Heart right ventricle (tissue), 16 donors: ENCODE measurements at regions of chr1 and their contacts with region 1.

Region 1: DNA sequence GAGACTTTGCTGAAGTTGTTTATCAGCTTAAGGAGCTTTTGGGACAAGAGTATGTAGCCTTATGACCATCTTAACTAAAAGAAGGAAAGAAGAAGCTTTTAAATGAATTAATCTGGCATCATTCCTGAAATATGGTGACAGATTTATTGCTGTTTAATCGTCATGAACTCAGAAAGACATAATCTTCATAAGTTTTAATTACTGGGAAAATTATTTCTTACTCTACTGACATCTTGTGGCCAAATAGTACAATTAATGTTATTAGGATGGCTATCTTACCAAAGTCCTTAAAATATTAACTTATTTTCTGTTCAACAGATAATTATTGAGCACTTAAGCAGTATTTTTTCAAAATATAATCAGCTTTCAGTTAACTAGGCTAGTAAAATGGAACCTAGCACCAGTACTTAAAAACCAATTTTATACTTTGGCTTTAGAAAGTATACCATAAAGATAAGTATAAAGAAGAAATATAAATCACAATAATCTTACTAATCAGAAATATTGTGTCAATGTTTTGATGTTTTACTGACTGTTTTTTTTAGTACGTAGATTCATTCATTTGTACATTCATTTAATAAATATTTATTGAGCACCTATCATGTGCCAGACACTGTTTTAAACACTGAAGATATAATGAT is 34.7 kb upstream of the GPR25 start:
- DNase-seq: no peak
- ATAC-seq: no peak
- H3K4me3 ChIP-seq: no peak overlapping the region
- H3K27ac ChIP-seq: no peak overlapping the region
- H3K4me1 ChIP-seq: peaks cover 0 to 5% (median 0%) of the 10 kb centered on the region in 9 donors
- H3K27me3 ChIP-seq: no peaks in the 10 kb centered on the region
- CTCF ChIP-seq: peak in 8 of 9 donors; percentile 38 to 68 (median 57)

Region 2: GRCh38 chr1:200558866-200559459 is 279.1 kb before region 1 on chr1:
- intact Hi-C with region 1: loop called in 2 of 10 experiments (anchors 10 kb)
- DNase-seq: peak in 1 of 2 donors; percentile 5
- ATAC-seq: no peak
- H3K4me3 ChIP-seq: no peak overlapping the region
- H3K27ac ChIP-seq: no peak overlapping the region
- H3K4me1 ChIP-seq: no peaks in the 10 kb centered on the region
- H3K27me3 ChIP-seq: no peaks in the 10 kb centered on the region
- CTCF ChIP-seq: peak; percentile 11 to 69 (median 55)

Region 3: DNA sequence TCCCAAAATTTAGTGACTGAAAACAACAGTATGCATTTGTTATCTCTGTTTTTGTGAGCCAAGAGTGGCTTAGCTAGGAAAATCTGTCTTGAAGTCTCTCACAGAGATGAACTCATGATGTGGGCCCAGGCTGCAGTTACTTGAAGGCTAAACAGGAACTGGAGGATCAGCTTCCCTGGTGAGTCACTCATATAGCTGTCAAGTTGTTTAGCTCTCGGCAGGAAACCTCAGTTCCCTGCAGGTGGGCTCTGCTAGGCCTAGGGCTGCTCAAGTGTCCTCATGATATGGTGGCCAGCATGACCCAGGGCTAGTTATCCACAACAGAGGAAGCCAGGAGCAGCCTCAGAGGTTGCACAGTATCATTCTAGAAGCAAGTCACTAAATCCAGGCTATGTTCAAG is 138.2 kb before region 1 on chr1:
- intact Hi-C with region 1: no loop called
- DNase-seq: no peak
- ATAC-seq: no peak
- H3K4me3 ChIP-seq: no peak overlapping the region
- H3K27ac ChIP-seq: no peak overlapping the region
- H3K4me1 ChIP-seq: no peaks in the 10 kb centered on the region
- H3K27me3 ChIP-seq: no peaks in the 10 kb centered on the region
- CTCF ChIP-seq: no peak

Region 4: DNA sequence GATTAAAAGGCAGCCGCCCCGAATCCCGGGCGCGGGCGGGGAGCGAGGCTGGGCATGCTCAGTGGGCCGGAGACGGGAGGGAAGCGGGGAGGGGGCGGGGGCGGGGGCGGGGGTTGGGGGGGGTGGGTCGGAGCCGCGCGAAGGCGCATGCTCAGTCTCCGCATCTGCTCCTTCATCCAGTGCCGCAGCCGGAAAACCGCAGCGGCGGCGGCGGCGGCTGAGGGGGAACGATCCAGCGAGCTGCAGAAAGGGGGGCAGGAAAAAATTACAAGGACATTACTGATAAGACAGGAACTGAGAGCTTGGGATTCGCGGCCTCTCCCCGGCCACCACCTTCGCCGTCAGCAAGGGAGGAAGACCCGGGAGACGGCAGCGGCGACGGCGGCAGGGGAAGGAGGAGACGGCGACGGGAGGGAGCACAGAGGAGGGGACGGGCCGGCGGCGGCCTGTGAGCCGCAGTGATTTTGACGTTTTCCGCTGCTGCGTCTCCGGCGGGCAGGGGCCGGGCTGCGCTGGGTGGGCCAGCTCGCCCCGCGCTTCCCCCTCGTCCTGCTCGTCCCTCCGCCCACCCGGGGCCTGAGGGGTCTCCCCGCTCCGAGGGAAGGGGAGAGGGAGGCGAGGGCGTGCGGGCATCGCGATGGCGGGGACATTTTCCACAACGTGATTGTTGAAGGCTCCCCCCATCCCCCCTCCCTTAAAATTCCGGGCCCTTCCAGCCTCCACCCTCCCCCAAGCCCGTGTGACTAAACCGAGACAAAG is 99.1 kb before region 1 on chr1 and contains the start of gene CAMSAP2:
- intact Hi-C with region 1: no loop called
- DNase-seq: peak; percentile 91 to 92
- ATAC-seq: peak; percentile 91 to 97 (median 93)
- H3K4me3 ChIP-seq: peak within 1 kb of the TSS; percentile 69 to 98 (median 90)
- H3K27ac ChIP-seq: peak within 1 kb of the TSS; percentile 97 to 100 (median 100)
- H3K4me1 ChIP-seq: peaks cover 5 to 47% (median 36%) of the 10 kb centered on the region in 9 donors
- H3K27me3 ChIP-seq: peaks cover 0 to 39% (median 0%) of the 10 kb centered on the region in 7 donors
- CTCF ChIP-seq: no peak
- total RNA-seq, gene CAMSAP2: 36.4 to 47.1 (median 38.1) TPM

Region 5: GRCh38 chr1:200802865-200803512 is 35.1 kb before region 1 on chr1:
- intact Hi-C with region 1: no loop called
- DNase-seq: peak; percentile 50 to 79
- ATAC-seq: peak; percentile 67 to 91 (median 87)
- H3K4me3 ChIP-seq: no peak overlapping the region
- H3K27ac ChIP-seq: no peak overlapping the region
- H3K4me1 ChIP-seq: peaks cover 0 to 19% (median 9%) of the 10 kb centered on the region in 9 donors
- H3K27me3 ChIP-seq: no peaks in the 10 kb centered on the region
- CTCF ChIP-seq: peak; percentile 79 to 97 (median 92)

Region 6: DNA sequence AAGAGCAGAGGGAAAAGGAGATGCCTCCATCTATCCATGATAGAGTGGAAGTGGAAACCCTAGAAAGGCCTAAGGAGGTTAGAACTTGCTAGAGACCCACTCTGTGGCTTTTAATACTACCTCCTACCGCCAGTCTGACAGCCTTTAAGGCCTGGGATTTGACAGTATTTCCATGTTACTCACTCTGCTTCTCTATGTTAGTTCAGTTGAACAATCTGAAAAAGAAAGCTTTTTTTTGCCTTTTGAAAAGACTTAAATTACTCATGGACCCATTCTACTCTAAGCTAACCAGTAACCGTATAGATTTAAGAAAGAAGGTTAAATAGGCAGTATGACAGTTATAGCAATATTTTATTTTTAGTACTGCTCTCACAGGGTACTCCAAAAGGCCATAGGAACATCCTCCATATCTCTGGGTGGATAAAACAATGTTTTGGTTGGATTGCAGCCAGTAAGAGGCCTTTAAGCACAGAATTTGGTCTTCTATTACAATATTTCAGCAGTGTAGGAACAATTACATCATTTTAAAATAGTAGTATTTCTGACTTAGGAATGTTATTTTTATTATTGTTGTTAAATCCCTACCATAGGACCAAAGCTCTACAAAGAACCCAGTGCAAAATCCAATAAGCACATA is 18.8 kb after region 1 on chr1:
- intact Hi-C with region 1: no loop called
- DNase-seq: no peak
- ATAC-seq: peak in 3 of 8 donors; percentile 27 to 37 (median 31)
- H3K4me3 ChIP-seq: no peak overlapping the region
- H3K27ac ChIP-seq: peak overlapping the region in 1 of 10 donors; percentile 38
- H3K4me1 ChIP-seq: peaks cover 0 to 13% (median 8%) of the 10 kb centered on the region in 9 donors
- H3K27me3 ChIP-seq: no peaks in the 10 kb centered on the region
- CTCF ChIP-seq: no peak